B cell (primary cell): ENCODE measurements at regions of chr22 and their contacts with region 1.

Region 1: DNA sequence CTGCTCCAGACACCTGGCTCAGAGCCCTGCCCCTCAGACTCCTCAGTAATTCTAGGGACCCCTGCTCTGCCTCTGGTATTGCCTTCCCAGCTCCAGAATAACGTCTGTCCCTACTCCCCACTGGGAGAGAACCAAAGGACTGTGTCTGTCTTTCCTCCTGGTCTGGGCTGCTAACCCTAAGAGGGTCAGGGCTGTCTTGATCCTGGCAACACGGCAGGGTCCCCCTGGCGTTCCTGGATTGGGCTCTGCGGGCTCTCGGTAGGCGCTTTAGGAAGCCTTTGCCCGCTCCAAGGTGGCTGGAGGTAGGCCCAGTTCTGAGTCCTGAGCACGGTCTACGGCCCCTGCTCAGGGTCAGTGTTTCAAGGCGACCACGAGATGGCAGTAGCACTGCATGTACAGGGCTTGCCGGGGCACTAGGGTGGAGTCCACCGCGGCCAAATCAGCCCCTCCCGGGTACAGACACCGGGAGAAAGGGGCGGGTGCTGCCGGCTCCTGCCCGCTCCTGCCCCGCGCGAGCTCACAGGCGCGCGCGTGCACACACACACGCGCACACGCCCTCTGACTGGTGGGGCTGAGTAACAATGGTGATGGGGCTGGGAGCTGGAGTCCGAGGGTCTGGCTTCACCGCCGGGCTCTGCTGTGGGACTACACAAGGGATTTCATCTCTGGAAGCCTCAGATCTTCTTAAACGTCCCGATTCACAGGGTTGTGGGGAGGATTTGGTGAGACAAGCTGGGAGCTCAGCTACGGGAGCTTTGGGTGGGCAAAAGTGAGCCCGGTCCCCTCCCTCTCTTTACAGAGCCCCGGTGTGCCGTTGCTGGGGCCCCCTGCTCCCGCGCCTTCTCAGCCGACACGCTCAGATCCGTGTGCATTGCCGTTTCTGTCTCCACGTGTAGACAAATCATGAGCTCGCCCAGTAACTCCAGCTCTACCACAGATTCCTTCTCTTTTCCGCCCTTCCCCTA is 30.1 kb upstream of the HMOX1 start:
- DNase-seq: peak; percentile 92
- ATAC-seq: peak; percentile 59
- H3K4me3 ChIP-seq: peak overlapping the region; percentile 53 to 82 (median 56)
- H3K4me3 Mint-ChIP-seq: peak overlapping the region; percentile 90
- H3K27ac ChIP-seq: peak overlapping the region; percentile 92 to 95
- H3K27ac Mint-ChIP-seq: peak overlapping the region; percentile 99
- H3K4me1 ChIP-seq: peaks cover 38 to 51% of the 10 kb centered on the region in 2 donors
- H3K4me1 Mint-ChIP-seq: peaks cover 50% of the 10 kb centered on the region
- H3K27me3 ChIP-seq: no peaks in the 10 kb centered on the region
- H3K27me3 Mint-ChIP-seq: no peaks in the 10 kb centered on the region
- CTCF ChIP-seq: peak; percentile 88

Region 2: DNA sequence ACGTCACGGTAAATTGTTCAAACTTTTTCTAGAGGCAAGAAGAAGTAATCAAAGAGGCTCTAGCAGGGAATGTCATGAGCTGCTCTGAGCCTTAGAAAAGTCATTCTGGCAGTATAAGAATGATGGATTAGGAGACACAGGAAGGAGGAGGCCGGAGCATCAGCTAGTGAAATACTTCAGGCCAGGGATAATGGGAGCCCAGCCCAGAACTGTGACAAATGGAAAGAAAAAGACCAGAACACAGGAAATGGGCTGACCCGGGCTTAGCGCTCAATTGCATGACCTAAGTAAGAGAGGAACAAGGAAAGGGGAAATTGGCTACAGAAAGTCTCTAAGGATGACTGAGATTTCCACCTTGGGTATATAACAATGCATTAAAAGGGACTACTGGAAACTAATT is 1539.1 kb before region 1 on chr22:
- CTCF ChIA-PET with region 1: no interaction called
- POLR2A ChIA-PET with region 1: interaction called, 12 read pairs
- intact Hi-C with region 1: no loop called
- DNase-seq: no peak
- ATAC-seq: no peak
- H3K4me3 ChIP-seq: no peak overlapping the region
- H3K4me3 Mint-ChIP-seq: no peak overlapping the region
- H3K27ac ChIP-seq: no peak overlapping the region
- H3K27ac Mint-ChIP-seq: peak overlapping the region; percentile 17
- H3K4me1 ChIP-seq: peaks cover 16 to 18% of the 10 kb centered on the region in 2 donors
- H3K4me1 Mint-ChIP-seq: peaks cover 43% of the 10 kb centered on the region
- H3K27me3 ChIP-seq: no peaks in the 10 kb centered on the region
- H3K27me3 Mint-ChIP-seq: no peaks in the 10 kb centered on the region
- CTCF ChIP-seq: no peak

Region 3: GRCh38 chr22:35204807-35205775 is 145.7 kb before region 1 on chr22:
- CTCF ChIA-PET with region 1: no interaction called
- POLR2A ChIA-PET with region 1: no interaction called
- intact Hi-C with region 1: no loop called
- DNase-seq: no peak
- ATAC-seq: no peak
- H3K4me3 ChIP-seq: no peak overlapping the region
- H3K4me3 Mint-ChIP-seq: no peak overlapping the region
- H3K27ac ChIP-seq: no peak overlapping the region
- H3K27ac Mint-ChIP-seq: no peak overlapping the region
- H3K4me1 ChIP-seq: no peaks in the 10 kb centered on the region
- H3K4me1 Mint-ChIP-seq: no peaks in the 10 kb centered on the region
- H3K27me3 ChIP-seq: peaks cover 0 to 10% (median 0%) of the 10 kb centered on the region in 4 experiments
- H3K27me3 Mint-ChIP-seq: peaks cover 30% of the 10 kb centered on the region
- CTCF ChIP-seq: no peak

Region 4: DNA sequence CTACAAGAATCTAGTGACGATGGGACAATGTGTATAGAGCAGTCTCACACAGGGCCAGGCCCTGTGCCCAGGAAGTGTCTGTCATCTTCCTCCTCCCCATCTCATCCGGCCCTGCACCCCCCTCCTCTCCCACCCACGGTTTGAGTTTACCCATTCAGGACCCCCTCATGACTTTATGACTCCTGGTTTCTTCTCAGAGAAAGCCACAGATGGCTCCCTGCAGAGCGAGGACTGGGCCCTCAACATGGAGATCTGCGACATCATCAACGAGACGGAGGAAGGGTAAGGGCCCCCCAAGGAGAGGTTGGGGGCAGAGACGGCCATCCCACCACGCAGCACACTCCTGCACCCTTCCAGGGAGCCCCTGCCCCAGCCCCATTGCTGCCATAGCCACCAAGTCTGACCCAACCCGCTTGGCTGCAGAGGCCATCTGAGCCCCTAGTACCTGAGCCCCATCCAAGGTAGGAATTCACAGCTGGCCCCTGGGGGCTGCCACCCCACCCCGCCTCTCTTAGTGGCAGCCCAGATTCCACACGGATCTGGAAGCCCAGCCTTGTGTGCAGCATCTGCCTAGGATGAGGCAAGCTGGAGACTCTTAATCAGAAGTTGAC is 33.0 kb before region 1 on chr22:
- CTCF ChIA-PET with region 1: no interaction called
- POLR2A ChIA-PET with region 1: no interaction called
- intact Hi-C with region 1: no loop called
- DNase-seq: no peak
- ATAC-seq: no peak
- H3K4me3 ChIP-seq: no peak overlapping the region
- H3K4me3 Mint-ChIP-seq: no peak overlapping the region
- H3K27ac ChIP-seq: no peak overlapping the region
- H3K27ac Mint-ChIP-seq: no peak overlapping the region
- H3K4me1 ChIP-seq: no peaks in the 10 kb centered on the region
- H3K4me1 Mint-ChIP-seq: peaks cover 4% of the 10 kb centered on the region
- H3K27me3 ChIP-seq: no peaks in the 10 kb centered on the region
- H3K27me3 Mint-ChIP-seq: no peaks in the 10 kb centered on the region
- CTCF ChIP-seq: no peak

Region 5: GRCh38 chr22:35367301-35367886 is 16.6 kb after region 1 on chr22:
- CTCF ChIA-PET with region 1: interaction called, 14 read pairs
- POLR2A ChIA-PET with region 1: interaction called, 20 read pairs
- intact Hi-C with region 1: loop called (anchors 1 kb)
- DNase-seq: peak; percentile 89
- ATAC-seq: peak; percentile 88
- H3K4me3 ChIP-seq: peak overlapping the region in 1 of 5 experiments; percentile 5
- H3K4me3 Mint-ChIP-seq: peak overlapping the region; percentile 65
- H3K27ac ChIP-seq: peak overlapping the region; percentile 37 to 67
- H3K27ac Mint-ChIP-seq: peak overlapping the region; percentile 81
- H3K4me1 ChIP-seq: peaks cover 30 to 59% of the 10 kb centered on the region in 2 donors
- H3K4me1 Mint-ChIP-seq: peaks cover 49% of the 10 kb centered on the region
- H3K27me3 ChIP-seq: no peaks in the 10 kb centered on the region
- H3K27me3 Mint-ChIP-seq: no peaks in the 10 kb centered on the region
- CTCF ChIP-seq: peak; percentile 28

Region 6: DNA sequence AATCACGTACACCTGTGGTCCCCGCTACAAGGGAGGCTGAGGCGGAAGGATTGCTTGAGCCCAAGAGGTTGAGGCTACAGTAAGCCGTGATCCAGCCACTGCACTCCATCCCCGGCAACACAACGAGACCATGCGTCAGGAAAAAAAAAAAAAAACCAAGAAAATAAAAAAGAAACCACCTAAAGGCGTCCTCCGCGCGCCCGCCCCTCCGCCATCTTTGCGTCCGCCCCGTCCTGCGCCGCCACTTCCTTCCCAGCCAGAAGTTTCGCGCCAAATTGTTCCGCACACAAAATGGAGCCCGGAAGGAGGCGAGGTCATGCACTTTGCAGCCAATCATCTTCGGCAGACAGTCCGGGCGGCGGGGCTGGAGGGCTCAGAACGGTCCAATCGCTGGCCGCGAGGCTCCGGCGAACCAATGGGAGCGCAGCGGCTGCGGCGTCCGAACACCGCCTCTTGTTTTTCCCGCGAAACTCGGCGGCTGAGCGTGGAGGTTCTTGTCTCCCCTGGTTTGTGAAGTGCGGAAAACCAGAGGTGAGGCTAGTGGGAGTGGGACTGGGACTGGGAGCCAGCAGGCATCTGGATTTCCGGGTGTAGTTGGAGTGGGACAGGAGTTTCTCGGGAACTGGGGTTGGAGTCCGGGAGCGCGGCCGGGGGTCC is 49.0 kb after region 1 on chr22 and contains the start of gene MCM5:
- CTCF ChIA-PET with region 1: interaction called, 311 read pairs
- POLR2A ChIA-PET with region 1: interaction called, 7 read pairs
- intact Hi-C with region 1: loop called (anchors 1 kb)
- DNase-seq: peak; percentile 98
- ATAC-seq: peak; percentile 97
- H3K4me3 ChIP-seq: peak within 1 kb of the TSS; percentile 76 to 100 (median 90)
- H3K4me3 Mint-ChIP-seq: peak within 1 kb of the TSS; percentile 98
- H3K27ac ChIP-seq: peak within 1 kb of the TSS; percentile 82 to 92
- H3K27ac Mint-ChIP-seq: peak within 1 kb of the TSS; percentile 98
- H3K4me1 ChIP-seq: peaks cover 35 to 64% of the 10 kb centered on the region in 2 donors
- H3K4me1 Mint-ChIP-seq: peaks cover 50% of the 10 kb centered on the region
- H3K27me3 ChIP-seq: no peaks in the 10 kb centered on the region
- H3K27me3 Mint-ChIP-seq: no peaks in the 10 kb centered on the region
- CTCF ChIP-seq: no peak
- total RNA-seq, gene MCM5: 203 and 221 TPM in 2 replicates

Region 7: DNA sequence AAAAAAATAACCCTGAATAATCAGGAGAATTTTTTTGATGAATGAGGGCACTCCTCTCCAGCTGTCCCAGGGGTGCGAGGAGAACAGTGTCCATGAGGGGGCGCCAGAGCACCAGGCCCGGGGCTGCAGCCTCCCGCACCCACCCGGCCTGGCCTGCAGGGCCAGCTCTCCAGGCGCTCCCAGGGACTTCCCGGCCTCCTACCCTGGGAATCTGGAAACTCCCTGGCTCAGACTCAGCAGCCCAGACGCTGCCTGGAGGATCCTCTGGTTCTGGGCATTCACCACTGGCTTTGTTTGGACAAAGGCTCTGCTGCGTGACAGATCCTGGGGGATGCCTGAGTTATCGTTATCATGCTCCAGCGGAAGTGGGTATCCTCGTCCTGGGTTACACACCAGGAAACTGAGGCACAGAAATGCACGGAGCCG is 80.1 kb after region 1 on chr22:
- CTCF ChIA-PET with region 1: interaction called, 14 read pairs
- POLR2A ChIA-PET with region 1: no interaction called
- intact Hi-C with region 1: no loop called
- DNase-seq: peak; percentile 68
- ATAC-seq: peak; percentile 80
- H3K4me3 ChIP-seq: no peak overlapping the region
- H3K4me3 Mint-ChIP-seq: no peak overlapping the region
- H3K27ac ChIP-seq: no peak overlapping the region
- H3K27ac Mint-ChIP-seq: no peak overlapping the region
- H3K4me1 ChIP-seq: no peaks in the 10 kb centered on the region
- H3K4me1 Mint-ChIP-seq: peaks cover 6% of the 10 kb centered on the region
- H3K27me3 ChIP-seq: no peaks in the 10 kb centered on the region
- H3K27me3 Mint-ChIP-seq: no peaks in the 10 kb centered on the region
- CTCF ChIP-seq: peak; percentile 82

Region 8: DNA sequence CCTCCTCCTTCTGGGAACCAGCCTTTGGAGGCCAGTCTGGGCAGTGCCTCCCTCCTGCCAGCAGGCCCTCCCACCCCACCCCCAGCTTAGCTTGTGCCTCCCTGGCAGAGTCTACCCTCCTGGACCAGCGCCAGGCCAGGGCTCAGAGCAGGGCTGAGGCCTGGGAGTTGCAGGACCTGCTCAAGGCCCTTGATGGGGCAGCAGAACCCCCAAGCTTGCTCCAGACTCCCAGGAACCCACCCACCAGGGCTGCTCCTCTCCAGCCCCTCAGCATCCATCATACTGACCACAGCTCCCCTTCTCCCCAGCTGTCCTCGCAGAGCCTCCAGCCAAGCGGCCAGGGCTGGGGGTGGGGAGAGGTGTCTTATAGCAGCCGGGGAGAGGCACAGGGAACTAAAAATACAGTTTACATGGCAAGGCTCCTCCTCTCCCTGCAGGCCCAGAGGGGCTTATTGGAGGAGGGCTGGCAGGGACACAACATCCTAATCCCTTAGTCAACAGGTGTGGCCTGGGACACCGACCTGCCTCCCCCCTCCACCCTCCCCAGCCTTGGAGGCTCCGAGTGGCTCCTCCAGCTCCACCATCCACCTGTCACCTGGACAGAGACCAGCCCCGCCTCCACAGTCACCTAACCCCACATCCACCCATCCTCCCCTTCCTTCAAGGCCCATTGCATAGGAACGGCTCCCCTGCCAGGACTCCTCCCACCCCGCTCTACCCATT is 271.5 kb after region 1 on chr22:
- CTCF ChIA-PET with region 1: interaction called, 11 read pairs
- POLR2A ChIA-PET with region 1: no interaction called
- intact Hi-C with region 1: no loop called
- DNase-seq: no peak
- ATAC-seq: no peak
- H3K4me3 ChIP-seq: no peak overlapping the region
- H3K4me3 Mint-ChIP-seq: no peak overlapping the region
- H3K27ac ChIP-seq: no peak overlapping the region
- H3K27ac Mint-ChIP-seq: no peak overlapping the region
- H3K4me1 ChIP-seq: peaks cover 5% of the 10 kb centered on the region in 2 donors
- H3K4me1 Mint-ChIP-seq: peaks cover 5% of the 10 kb centered on the region
- H3K27me3 ChIP-seq: peaks cover 0 to 32% (median 22%) of the 10 kb centered on the region in 4 experiments
- H3K27me3 Mint-ChIP-seq: peaks cover 33% of the 10 kb centered on the region
- CTCF ChIP-seq: no peak